ENCODE measurements at regions of chr1 and their contacts with region 1.

Region 1: DNA sequence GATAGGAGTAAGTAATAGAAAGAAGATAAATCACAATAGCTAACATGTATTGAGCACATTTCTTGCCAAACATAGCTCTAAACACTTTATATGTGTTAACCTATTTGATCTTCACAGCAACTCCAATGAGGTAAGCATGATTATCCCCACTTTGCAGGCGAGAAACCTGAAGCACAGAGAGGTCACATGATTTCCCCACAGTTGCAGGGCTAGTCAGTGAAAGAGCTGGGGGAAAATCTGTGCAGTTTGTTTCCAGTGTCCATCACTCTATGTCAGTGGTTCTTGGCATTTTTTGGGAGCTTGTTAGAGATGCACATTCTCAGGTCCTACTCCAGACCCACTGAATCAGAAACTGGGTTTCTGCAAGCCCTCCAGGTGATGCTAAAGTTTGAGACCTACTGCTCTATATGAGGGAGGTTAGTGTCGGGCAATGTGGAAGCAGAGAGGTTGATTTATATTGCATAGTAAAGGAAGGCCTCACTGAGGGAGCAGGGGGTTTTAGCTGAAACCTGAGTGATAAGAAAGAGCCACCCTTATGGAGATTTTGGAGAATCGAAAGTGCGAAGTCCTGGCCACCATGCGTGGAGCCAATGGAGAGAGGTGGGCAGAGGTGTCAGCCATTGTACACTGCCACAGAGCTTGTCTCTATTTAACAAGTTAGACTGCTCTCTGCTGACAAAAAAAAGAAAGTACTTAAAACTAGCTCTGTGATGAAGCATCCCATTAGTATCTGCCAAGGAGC is 20.9 kb downstream of the MCOLN3 start:
- DNase-seq: peak; percentile 34
- ATAC-seq: peak; percentile 84
- H3K4me3 Mint-ChIP-seq: no peak overlapping the region
- H3K27ac Mint-ChIP-seq: peak overlapping the region; percentile 20
- H3K4me1 Mint-ChIP-seq: peaks cover 10% of the 10 kb centered on the region
- H3K27me3 Mint-ChIP-seq: no peaks in the 10 kb centered on the region

Region 2: DNA sequence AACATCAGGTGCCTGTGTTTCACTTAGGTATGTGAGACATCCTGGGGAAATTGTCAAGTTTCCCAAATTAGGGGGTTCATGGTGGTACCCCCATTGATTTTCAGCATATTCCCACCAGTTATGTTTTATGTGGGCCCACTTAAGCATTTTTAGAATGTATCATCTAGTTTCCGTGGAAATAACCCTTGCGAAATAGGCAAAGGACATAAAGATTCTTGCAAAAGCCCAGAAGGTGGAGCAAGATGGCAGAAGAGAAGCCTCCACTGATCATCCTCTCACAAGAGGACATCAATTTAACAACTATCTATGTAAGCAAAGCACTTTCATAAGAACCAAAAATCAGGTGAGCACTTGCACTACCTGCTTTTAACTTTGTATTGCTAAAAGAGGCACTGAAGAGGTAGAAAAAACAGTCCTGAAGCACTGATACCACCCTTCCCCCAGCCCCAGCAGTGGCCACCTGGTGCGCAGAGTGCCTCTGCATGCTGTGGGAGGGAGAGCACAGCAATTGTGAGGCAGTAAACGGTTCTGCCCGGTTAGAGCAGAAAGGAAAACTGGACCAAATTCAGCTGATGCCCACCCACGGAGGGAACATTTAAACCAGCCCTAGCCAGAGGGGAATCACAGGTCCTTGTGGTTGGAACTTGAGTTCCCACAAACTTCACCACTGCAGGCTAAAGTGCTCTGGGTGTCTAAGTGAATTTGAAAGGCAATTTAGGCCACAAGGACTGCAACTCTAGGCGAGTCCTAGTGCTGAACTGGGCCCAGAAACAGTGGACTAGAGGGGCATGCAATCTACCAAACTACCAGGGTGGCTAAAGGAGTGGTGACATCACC is 53.7 kb before region 1 on chr1:
- CTCF ChIA-PET with region 1: interaction called, 20 read pairs
- POLR2A ChIA-PET with region 1: no interaction called
- DNase-seq: no peak
- ATAC-seq: no peak
- H3K4me3 Mint-ChIP-seq: no peak overlapping the region
- H3K27ac Mint-ChIP-seq: peak overlapping the region; percentile 56
- H3K4me1 Mint-ChIP-seq: peaks cover 55% of the 10 kb centered on the region
- H3K27me3 Mint-ChIP-seq: peaks cover 2% of the 10 kb centered on the region

Region 3: GRCh38 chr1:84996846-84997666 is 30.4 kb before region 1 on chr1 and contains the start of gene MCOLN2:
- CTCF ChIA-PET with region 1: interaction called, 17 read pairs
- POLR2A ChIA-PET with region 1: no interaction called
- DNase-seq: peak; percentile 66
- ATAC-seq: peak; percentile 88
- H3K4me3 Mint-ChIP-seq: peak within 1 kb of the TSS; percentile 84
- H3K27ac Mint-ChIP-seq: peak within 1 kb of the TSS; percentile 47
- H3K4me1 Mint-ChIP-seq: peaks cover 52% of the 10 kb centered on the region
- H3K27me3 Mint-ChIP-seq: peaks cover 32% of the 10 kb centered on the region
- total RNA-seq, gene MCOLN2: 11.4 to 12.9 TPM

Region 4: DNA sequence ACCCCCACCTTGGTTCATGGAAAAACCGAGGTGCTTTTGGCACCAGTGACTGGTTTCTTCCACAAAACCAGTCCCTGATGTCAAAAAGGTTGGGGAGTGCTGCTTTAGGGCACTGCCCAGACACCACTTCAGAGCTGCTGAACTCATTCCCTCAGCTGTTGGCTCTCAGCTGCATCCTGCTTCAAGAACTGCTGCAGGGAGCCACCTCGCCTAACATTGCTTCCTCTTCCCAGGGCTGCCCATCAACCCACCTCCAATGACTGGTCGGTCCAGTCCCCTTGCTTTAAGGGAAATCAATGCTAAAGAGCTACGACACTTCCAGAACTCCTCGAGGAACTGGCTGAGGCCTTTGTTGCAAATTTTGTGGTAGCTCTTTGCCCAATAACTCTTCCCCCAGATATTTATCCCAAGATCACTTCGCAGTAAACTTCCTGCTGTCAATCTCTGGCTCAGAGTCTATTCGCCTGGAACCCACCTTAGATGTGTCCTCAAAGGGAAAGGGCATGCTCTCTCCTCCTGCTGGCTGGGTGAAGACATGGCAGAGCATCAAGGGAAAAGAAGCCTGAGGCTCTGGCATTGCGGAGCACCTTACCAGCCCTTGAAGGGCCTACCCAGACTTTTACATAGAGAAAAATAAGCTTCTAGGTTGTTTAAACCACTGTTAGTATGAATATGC is 203.0 kb after region 1 on chr1:
- CTCF ChIA-PET with region 1: no interaction called
- POLR2A ChIA-PET with region 1: no interaction called
- DNase-seq: no peak
- ATAC-seq: peak; percentile 58
- H3K4me3 Mint-ChIP-seq: no peak overlapping the region
- H3K27ac Mint-ChIP-seq: no peak overlapping the region
- H3K4me1 Mint-ChIP-seq: peaks cover 3% of the 10 kb centered on the region
- H3K27me3 Mint-ChIP-seq: peaks cover 19% of the 10 kb centered on the region

Region 5: DNA sequence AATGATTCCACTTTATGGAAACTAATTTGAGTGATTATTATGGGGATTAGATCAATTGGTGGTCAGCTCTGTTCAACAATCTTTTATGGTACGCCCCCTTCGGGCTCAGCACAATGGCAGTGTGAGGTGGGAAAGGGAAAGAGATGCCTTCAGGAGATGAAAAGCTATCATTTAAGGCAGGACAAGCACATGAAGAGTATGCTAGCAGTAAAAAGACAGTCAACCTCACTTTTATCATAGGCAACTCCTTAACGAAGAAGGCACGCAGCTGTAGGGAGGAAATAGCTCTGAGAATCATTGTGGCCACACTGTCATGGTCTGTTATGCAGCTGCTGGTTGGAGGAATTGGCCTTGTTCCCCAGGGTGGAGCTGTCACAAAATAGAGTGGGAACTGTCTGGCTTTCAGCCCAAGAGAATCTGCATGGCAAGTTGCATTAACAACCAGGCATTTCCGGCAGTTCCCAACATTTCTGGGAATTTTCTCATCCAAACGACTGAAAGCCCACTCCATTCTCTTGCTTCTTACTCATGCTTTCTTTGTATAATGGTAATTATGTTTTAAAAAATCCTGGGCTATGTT is 303.4 kb after region 1 on chr1:
- CTCF ChIA-PET with region 1: no interaction called
- POLR2A ChIA-PET with region 1: no interaction called
- DNase-seq: no peak
- ATAC-seq: no peak
- H3K4me3 Mint-ChIP-seq: no peak overlapping the region
- H3K27ac Mint-ChIP-seq: no peak overlapping the region
- H3K4me1 Mint-ChIP-seq: peaks cover 7% of the 10 kb centered on the region
- H3K27me3 Mint-ChIP-seq: peaks cover 35% of the 10 kb centered on the region

Measured in activated CD8-positive, alpha-beta T cell treated with anti-CD3 and anti-CD28 coated beads, Interleukin-2, amount 10 ng/mL, durations not matched to agents 7 days and 5 days (primary cell).